ENCODE measurements at regions of chr20 and their contacts with region 1.

Region 1: GRCh38 chr20:3222635-3223600 is 13.6 kb downstream of the ITPA start:
- DNase-seq: no peak
- ATAC-seq: peak; percentile 21 to 79

Region 2: GRCh38 chr20:3312940-3313682 is 90.2 kb after region 1 on chr20:
- intact Hi-C with region 1: loop called in 1 of 2 experiments (anchors 5 kb)
- DNase-seq: no peak
- ATAC-seq: peak; percentile 59 to 78